ENCODE measurements at regions of chr1 and their contacts with region 1.

Region 1: GRCh38 chr1:230310381-230311163 is 115.6 kb downstream of the PGBD5 start:
- DNase-seq: peak; percentile 63 to 92
- H3K4me3 ChIP-seq: no peak overlapping the region
- CTCF ChIP-seq: peak in 1 of 3 donors; percentile 69
- POLR2A ChIP-seq: no peak

Region 2: DNA sequence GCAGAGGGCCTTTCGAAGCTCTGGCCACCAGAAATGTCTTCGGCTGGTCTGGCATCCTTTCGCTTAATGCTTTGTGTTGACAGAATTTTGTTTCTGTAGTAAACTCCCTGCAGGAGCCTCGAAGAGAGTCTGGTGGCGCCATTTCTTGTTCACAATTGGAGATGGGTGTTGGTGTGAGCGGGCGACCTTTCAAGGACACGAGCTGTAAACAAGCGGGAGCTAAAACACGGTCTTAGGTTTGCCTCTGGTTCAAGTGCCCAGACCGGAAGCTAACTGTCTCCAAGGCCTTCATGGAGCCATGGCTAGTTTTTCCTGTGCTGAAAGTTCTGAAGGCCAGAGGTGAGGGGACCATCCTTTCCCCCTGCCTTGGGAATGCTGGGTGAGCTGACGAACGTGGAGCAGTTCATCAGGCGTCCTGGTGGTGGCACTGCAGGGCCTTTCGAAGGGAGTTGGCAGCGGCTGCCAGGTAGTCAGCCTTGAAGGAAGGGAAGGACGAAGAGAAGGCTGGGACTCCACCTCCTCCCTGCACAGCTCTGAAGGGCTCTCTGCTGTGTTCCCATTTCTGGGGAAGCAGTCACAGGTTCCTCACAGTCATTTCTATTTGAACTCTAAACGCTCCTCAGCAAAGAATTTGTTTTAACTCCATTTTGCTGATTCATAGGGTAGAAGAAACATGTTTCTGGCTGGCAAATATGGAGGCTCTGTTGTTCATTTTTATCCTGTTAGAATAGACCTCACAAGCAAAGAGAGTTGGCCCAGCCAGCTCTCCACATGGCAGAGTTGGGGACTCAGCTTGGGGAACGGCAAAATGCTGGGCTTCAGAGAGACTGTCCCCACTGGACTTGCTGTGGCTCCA is 649.3 kb before region 1 on chr1:
- intact Hi-C with region 1: loop called (anchors 10 kb)
- DNase-seq: peak; percentile 75 to 95
- H3K4me3 ChIP-seq: no peak overlapping the region
- CTCF ChIP-seq: peak in 1 of 3 donors; percentile 61
- POLR2A ChIP-seq: no peak

Region 3: GRCh38 chr1:230292689-230293389 is 17.7 kb before region 1 on chr1:
- intact Hi-C with region 1: no loop called
- DNase-seq: no peak
- H3K4me3 ChIP-seq: no peak overlapping the region
- CTCF ChIP-seq: no peak
- POLR2A ChIP-seq: no peak

Region 4: DNA sequence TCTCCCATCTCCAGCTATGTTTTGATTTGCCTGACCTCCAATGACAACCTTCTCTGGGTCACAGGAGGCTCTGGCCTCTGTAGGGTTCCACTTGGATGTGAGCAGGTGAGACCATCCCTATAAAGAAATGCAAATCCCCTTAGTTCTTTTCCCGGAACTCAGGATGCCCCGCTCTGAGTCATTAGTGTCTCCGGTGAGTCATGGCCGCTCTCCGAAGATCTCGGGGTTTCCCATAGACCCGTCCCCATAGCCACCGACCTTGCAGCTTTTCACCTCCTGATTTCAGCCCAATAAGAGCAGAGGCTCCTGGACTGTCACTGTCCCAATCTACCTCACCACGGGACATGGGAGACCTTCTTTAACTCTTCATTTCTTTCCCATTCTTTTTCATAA is 17.3 kb after region 1 on chr1:
- intact Hi-C with region 1: no loop called
- DNase-seq: no peak
- H3K4me3 ChIP-seq: no peak overlapping the region
- CTCF ChIP-seq: no peak
- POLR2A ChIP-seq: no peak